GM10248 (cell line): ENCODE measurements at regions of chr2 and their contacts with region 1.

Region 1: GRCh38 chr2:134245340-134245984 is 8.4 kb upstream of the MGAT5 start:
- DNase-seq: no peak
- CTCF ChIP-seq: peak; percentile 72

Region 2: GRCh38 chr2:134127496-134127895 is 118.0 kb before region 1 on chr2:
- CTCF ChIA-PET with region 1: interaction called, 13 read pairs
- POLR2A ChIA-PET with region 1: no interaction called
- DNase-seq: peak; percentile 40
- CTCF ChIP-seq: no peak

Region 3: GRCh38 chr2:134207564-134208209 is 37.8 kb before region 1 on chr2:
- CTCF ChIA-PET with region 1: interaction called, 51 read pairs
- POLR2A ChIA-PET with region 1: no interaction called
- DNase-seq: peak; percentile 44
- CTCF ChIP-seq: peak; percentile 73

Region 4: DNA sequence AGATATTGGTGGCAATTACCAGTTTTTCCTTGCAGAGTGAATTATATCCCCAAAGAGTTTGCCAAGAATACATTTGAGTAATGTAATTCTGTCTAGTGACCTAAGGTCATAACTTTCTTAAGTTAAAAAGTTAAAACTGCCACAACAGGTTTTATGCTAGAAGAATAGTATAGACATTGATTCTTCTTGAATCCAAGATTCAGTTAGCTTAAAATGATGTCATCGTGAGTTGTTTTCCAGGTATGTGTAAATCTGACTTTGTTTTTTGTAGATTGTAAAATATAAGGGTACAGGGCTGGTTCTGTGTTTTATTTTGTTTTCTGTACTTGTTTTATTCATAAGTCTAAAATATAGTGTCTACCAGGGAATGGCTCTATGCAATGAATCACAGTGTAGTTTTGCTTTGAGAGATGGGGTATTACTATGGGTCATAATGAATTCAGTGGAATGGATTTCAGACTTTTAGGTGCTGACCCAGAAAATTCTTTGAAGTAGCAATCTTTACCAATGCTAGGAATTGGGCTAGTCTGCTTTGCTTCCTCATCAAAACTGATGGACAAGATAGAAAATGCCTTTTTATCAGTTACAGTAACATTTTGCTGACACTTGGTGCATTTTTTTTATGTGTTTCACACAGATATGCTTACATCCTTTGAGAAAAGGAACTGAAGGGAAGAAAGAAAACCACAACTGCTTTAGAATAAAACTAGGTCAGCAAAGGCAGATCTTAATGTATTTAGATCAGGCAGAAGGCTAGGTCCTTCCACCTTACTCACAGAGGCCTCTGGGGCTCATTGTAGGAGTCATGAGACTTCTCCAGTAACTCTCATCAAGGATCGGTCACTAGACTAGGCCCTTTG is 12.4 kb before region 1 on chr2:
- CTCF ChIA-PET with region 1: interaction called, 126 read pairs
- POLR2A ChIA-PET with region 1: no interaction called
- DNase-seq: no peak
- CTCF ChIP-seq: no peak

Region 5: GRCh38 chr2:134268265-134268664 is 22.8 kb after region 1 on chr2:
- CTCF ChIA-PET with region 1: interaction called, 20 read pairs
- POLR2A ChIA-PET with region 1: no interaction called
- DNase-seq: no peak
- CTCF ChIP-seq: no peak